Sigmoid colon (tissue), 7 donors: ENCODE measurements at regions of chr10 and their contacts with region 1.

Region 1: GRCh38 chr10:22436884-22437619 is 91.8 kb downstream of the SPAG6 start:
- DNase-seq: peak; percentile 96
- H3K4me3 ChIP-seq: peak overlapping the region; percentile 56 to 82 (median 74)
- H3K27ac ChIP-seq: peak overlapping the region; percentile 95 to 98 (median 96)
- H3K4me1 ChIP-seq: peaks cover 0 to 18% (median 14%) of the 10 kb centered on the region in 4 donors
- H3K27me3 ChIP-seq: no peaks in the 10 kb centered on the region
- CTCF ChIP-seq: no peak
- EP300 ChIP-seq: no peak
- POLR2A ChIP-seq: peak; percentile 80 to 85

Region 2: DNA sequence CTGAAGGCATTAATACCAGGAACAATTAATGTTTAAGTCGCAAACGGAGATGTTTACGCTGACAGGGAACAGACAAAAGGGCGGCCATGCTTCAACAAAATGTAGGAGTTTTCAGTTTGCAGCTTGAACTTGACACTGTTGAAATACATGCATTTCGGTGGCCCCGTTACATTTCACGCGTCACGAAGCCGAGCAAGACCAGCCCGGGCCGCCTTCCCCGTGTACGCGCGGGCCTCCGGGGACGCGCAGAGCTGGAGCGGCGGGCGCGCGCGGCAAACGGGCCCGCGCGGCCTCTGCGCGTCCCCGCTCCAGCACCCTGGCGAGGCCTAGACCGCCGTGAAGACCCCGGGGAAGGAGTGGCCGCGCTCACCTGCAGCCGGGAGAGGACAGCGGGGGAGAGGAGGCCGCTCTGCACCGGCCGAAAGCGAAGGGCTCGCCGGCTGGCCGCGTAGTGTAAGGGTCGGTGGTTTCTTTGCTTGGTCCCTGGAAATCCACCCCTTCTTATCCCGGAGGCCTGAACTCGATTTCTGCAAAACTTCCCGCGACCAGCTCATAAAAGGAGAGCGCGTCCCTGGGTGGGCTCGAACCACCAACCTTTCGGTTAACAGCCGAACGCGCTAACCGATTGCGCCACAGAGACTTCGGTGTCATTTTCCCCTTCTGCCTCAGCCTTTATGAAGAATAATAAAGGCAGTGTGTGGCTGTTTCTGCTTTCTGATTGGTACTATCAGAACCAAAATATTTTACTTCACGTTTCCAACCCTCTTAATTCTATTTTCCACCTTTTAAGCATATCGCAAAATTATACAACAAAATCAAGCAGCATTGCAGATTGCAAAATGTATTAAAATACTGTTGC is 207.9 kb before region 1 on chr10:
- intact Hi-C with region 1: loop called (anchors 2 kb)
- DNase-seq: peak; percentile 93
- H3K4me3 ChIP-seq: peak overlapping the region; percentile 60 to 79 (median 75)
- H3K27ac ChIP-seq: peak overlapping the region; percentile 93 to 96 (median 96)
- H3K4me1 ChIP-seq: peaks cover 0 to 12% (median 7%) of the 10 kb centered on the region in 4 donors
- H3K27me3 ChIP-seq: no peaks in the 10 kb centered on the region
- CTCF ChIP-seq: no peak
- EP300 ChIP-seq: no peak
- POLR2A ChIP-seq: no peak

Region 3: GRCh38 chr10:22316285-22317120 is 120.5 kb before region 1 on chr10 and contains the start of gene COMMD3:
- intact Hi-C with region 1: loop called (anchors 5 kb)
- DNase-seq: peak; percentile 96
- H3K4me3 ChIP-seq: peak within 1 kb of the TSS; percentile 69 to 87 (median 78)
- H3K27ac ChIP-seq: peak within 1 kb of the TSS; percentile 94 to 96 (median 96)
- H3K4me1 ChIP-seq: peaks cover 0 to 38% (median 24%) of the 10 kb centered on the region in 4 donors
- H3K27me3 ChIP-seq: no peaks in the 10 kb centered on the region
- CTCF ChIP-seq: no peak
- EP300 ChIP-seq: no peak
- POLR2A ChIP-seq: peak; percentile 52 to 66
- total RNA-seq, gene COMMD3: 45.3 to 80.1 (median 61.6) TPM

Region 4: DNA sequence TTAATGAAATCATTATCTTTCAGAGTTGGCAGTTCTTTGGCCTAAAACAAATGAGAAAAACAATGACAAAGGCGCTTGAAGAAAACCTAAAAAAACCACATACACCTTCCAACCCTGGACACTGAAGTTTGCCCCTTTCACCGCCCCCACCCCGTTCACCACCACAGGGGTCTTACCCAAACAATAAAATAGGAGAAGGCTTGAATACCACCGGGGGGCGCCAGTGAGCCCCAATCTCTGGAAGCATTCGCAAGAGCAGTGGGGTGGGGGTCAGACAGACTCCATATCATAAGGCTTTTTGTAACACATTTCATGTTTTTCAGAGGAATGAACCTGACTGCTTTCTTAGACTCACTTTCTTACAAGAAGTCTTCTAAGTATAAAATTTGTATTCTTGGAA is 113.7 kb after region 1 on chr10:
- intact Hi-C with region 1: loop called (anchors 2 kb)
- DNase-seq: no peak
- H3K4me3 ChIP-seq: no peak overlapping the region
- H3K27ac ChIP-seq: no peak overlapping the region
- H3K4me1 ChIP-seq: peaks cover 0 to 14% (median 6%) of the 10 kb centered on the region in 4 donors
- H3K27me3 ChIP-seq: no peaks in the 10 kb centered on the region
- CTCF ChIP-seq: peak in 3 of 4 experiments; percentile 10 to 45 (median 28)
- EP300 ChIP-seq: no peak
- POLR2A ChIP-seq: no peak

Region 5: DNA sequence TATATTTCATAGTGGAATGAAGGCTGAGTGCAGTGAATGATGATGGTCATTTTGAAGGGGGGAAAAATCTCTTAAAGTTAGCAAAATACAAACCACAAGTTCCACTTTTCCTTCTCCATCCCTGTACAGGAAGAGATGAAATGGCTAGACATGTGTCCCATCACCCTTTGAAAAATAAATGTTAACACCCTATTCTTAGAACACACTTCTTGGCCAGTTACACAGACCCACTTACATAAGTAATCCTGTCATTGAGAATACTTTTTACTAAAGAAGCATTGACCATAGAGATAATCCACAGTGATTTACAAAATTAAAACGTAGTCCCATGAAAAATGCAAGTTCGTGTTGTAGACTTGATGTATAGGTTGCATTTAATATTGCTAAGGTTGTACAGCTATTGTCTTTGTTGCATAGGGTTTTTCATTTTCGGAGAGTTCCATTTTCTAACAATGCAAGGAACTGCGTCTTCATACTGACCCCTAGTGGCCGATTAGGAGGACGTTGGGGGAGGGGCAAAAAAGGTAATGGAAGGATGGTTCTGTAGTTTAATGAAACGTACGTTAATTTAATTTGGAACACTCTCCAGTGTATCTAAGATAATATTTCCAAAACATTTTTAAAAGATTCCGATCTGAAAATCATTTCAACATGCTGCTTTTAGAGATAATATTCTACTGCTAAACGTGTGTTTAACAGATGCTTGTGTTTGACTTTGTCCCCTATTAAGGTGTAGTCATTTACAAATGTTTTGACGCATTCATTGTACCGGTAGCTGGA is 551.7 kb after region 1 on chr10:
- intact Hi-C with region 1: loop called (anchors 2 kb)
- DNase-seq: peak; percentile 73
- H3K4me3 ChIP-seq: no peak overlapping the region
- H3K27ac ChIP-seq: no peak overlapping the region
- H3K4me1 ChIP-seq: peaks cover 0 to 11% (median 4%) of the 10 kb centered on the region in 4 donors
- H3K27me3 ChIP-seq: no peaks in the 10 kb centered on the region
- CTCF ChIP-seq: peak; percentile 78 to 89 (median 85)
- EP300 ChIP-seq: no peak
- POLR2A ChIP-seq: no peak

Region 6: GRCh38 chr10:23095404-23095965 is 658.4 kb after region 1 on chr10 and contains the start of gene MSRB2:
- intact Hi-C with region 1: loop called (anchors 5 kb)
- DNase-seq: peak; percentile 98
- H3K4me3 ChIP-seq: peak within 1 kb of the TSS; percentile 62 to 95 (median 79)
- H3K27ac ChIP-seq: peak within 1 kb of the TSS; percentile 90 to 99 (median 96)
- H3K4me1 ChIP-seq: peaks cover 0 to 17% (median 12%) of the 10 kb centered on the region in 4 donors
- H3K27me3 ChIP-seq: no peaks in the 10 kb centered on the region
- CTCF ChIP-seq: no peak
- EP300 ChIP-seq: no peak
- POLR2A ChIP-seq: peak; percentile 45 to 55
- total RNA-seq, gene MSRB2: 32.7 to 56.3 (median 47.0) TPM